ENCODE measurements at regions of chr2 and their contacts with region 1.

Region 1: DNA sequence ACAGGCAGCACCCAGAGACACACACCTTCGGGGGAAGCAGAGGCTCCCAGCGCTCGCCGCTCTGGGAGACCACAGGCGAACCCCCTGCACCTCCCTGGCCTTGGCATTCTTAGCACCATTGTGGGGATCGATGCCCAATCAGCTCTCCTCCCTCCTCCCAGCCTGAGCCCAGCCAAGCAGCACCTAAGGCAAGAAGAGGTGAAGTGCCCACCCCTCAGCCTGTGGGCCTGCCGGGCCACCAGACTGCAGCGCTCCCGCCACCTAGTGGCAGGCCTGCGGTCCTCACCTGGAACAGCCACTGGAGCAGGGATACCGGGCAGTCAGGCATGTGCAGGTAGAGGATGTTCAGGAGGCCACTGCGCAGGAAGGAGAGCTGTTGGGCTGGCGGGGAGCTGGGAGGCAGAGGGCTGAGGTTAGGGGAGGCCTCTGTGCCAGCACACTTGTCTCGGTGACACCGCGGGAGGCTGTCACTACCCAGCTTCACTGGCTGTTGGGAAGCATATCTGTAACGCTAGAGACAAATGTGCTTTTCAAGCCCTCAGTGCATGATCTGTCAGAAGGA is 35.2 kb downstream of the FAM178B start:
- DNase-seq: peak; percentile 63 to 76
- ATAC-seq: peak; percentile 91 to 96
- H3K4me3 ChIP-seq: no peak overlapping the region
- H3K27ac ChIP-seq: no peak overlapping the region
- H3K4me1 ChIP-seq: no peaks in the 10 kb centered on the region
- CTCF ChIP-seq: peak; percentile 81
- EP300 ChIP-seq: no peak
- POLR2A ChIP-seq: no peak
- RAD21 ChIP-seq: peak; percentile 84 to 85

Region 2: GRCh38 chr2:96413323-96413722 is 537.9 kb before region 1 on chr2:
- CTCF ChIA-PET with region 1: no interaction called
- POLR2A ChIA-PET with region 1: no interaction called
- DNase-seq: peak in 1 of 2 experiments; percentile 61
- ATAC-seq: peak; percentile 84 to 87
- H3K4me3 ChIP-seq: peak overlapping the region; percentile 47
- H3K27ac ChIP-seq: peak overlapping the region; percentile 72 to 79
- H3K4me1 ChIP-seq: peaks cover 34% of the 10 kb centered on the region
- CTCF ChIP-seq: peak; percentile 21; the same call in 2 of the 3 replicates
- EP300 ChIP-seq: no peak
- POLR2A ChIP-seq: no peak
- RAD21 ChIP-seq: no peak

Region 3: GRCh38 chr2:96816128-96816835 is 134.9 kb before region 1 on chr2 and contains the start of gene CNNM3:
- CTCF ChIA-PET with region 1: interaction called, 18 read pairs
- POLR2A ChIA-PET with region 1: no interaction called
- DNase-seq: peak; percentile 93 to 96
- ATAC-seq: peak; percentile 88 to 97
- H3K4me3 ChIP-seq: peak within 1 kb of the TSS; percentile 92
- H3K27ac ChIP-seq: peak within 1 kb of the TSS; percentile 91 to 94
- H3K4me1 ChIP-seq: peaks cover 30% of the 10 kb centered on the region
- CTCF ChIP-seq: peak; percentile 27
- EP300 ChIP-seq: no peak
- POLR2A ChIP-seq: peak; percentile 68
- RAD21 ChIP-seq: no peak; a peak in 2 of 5 replicates
- polyA plus RNA-seq, gene CNNM3: 11.8 and 13.6 TPM in 2 replicates

Region 4: GRCh38 chr2:96856776-96857673 is 94.1 kb before region 1 on chr2:
- CTCF ChIA-PET with region 1: interaction called, 123 read pairs
- POLR2A ChIA-PET with region 1: interaction called, 4 read pairs
- DNase-seq: peak in 1 of 2 experiments; percentile 43
- ATAC-seq: peak; percentile 16 to 27
- H3K4me3 ChIP-seq: peak overlapping the region; percentile 63
- H3K27ac ChIP-seq: peak overlapping the region; percentile 82 to 97
- H3K4me1 ChIP-seq: peaks cover 27% of the 10 kb centered on the region; the same call in 2 of the 3 replicates
- CTCF ChIP-seq: no peak
- EP300 ChIP-seq: no peak
- POLR2A ChIP-seq: no peak
- RAD21 ChIP-seq: no peak

Region 5: DNA sequence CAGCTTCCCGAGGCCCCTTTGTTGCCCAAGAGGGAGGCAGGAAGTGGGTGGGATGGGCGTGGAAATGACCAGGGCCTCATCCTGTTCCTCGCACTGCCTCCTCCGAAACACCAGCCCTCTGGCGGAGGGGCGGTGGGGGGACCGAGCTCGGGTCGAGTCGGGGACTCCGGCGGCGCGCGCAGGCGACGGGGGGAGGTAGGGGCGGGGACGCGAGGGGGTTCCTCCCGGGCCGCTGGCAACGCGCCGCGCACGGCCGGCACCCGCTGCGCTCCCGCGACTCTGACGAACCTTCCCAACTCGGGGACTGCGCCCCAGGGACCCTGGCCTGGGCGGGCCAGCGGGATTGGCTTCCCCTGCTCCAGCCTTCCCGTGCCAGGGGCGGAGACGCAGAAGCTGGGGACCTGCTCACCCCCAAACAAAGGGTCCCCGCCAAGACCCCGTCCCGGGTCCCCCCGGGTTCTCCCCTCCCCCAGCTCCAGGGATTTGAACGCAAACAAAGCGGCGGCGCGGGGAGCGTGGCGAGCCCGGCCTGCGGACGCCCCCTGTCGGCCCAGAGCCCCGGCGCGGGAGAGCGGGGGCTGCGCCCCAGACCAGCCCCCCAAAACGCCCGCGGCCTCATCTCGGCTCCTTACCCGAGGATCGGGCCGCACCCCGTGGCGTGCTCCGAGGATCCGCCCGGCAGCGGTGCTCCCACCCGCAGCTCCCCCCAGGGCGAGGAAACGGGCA is 82.5 kb before region 1 on chr2:
- CTCF ChIA-PET with region 1: interaction called, 44 read pairs
- POLR2A ChIA-PET with region 1: no interaction called
- DNase-seq: peak; percentile 87 to 89
- ATAC-seq: peak; percentile 81 to 90
- H3K4me3 ChIP-seq: peak overlapping the region; percentile 100
- H3K27ac ChIP-seq: peak overlapping the region; percentile 99 to 100
- H3K4me1 ChIP-seq: peaks cover 13% of the 10 kb centered on the region
- CTCF ChIP-seq: peak; percentile 77
- EP300 ChIP-seq: no peak
- POLR2A ChIP-seq: peak; percentile 77
- RAD21 ChIP-seq: peak in 1 of 2 experiments; percentile 51; a peak in 4 of 5 replicates

Region 6: DNA sequence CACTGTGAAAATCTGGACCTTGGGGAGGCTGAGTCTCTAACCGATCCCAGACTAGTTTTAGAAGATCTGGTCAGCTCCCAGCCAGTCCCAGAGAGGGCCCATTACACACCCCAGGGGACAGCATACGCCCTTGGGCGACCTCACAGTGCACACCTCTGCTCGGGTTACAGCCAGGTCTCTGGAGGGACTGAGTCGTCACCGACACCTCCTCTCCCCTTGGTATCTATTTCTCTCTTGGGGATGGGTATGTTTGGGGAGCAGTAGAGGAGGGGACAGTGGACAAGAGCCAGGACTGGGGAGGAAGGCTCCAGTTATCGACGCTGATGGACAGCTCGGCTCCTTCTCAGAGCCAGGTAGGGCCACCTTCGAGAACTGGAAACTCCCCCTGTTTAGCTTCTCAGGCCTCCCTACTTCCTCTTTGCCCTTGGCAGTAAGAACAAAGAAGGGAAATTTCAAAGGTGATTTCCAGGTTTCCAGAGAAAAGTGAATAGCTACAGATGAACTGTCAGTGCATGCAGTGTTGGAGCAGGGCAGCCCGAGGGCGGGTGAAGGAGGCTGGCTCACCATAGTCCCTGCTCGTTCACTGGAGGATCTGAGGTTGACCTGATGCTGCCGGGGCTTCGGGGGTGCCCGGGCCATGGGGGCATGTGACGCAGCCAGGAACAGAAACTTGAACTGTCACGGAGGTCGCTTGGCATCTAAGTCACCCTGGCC is 76.9 kb before region 1 on chr2:
- CTCF ChIA-PET with region 1: interaction called, 16 read pairs
- POLR2A ChIA-PET with region 1: no interaction called
- DNase-seq: no peak
- ATAC-seq: no peak
- H3K4me3 ChIP-seq: no peak overlapping the region
- H3K27ac ChIP-seq: no peak overlapping the region
- H3K4me1 ChIP-seq: peaks cover 7% of the 10 kb centered on the region
- CTCF ChIP-seq: no peak
- EP300 ChIP-seq: no peak
- POLR2A ChIP-seq: no peak
- RAD21 ChIP-seq: no peak

Region 7: GRCh38 chr2:96923810-96924774 is 27.1 kb before region 1 on chr2:
- CTCF ChIA-PET with region 1: interaction called, 15 read pairs
- POLR2A ChIA-PET with region 1: no interaction called
- DNase-seq: no peak
- ATAC-seq: no peak
- H3K4me3 ChIP-seq: no peak overlapping the region
- H3K27ac ChIP-seq: no peak overlapping the region
- H3K4me1 ChIP-seq: no peaks in the 10 kb centered on the region
- CTCF ChIP-seq: no peak
- EP300 ChIP-seq: no peak
- POLR2A ChIP-seq: no peak
- RAD21 ChIP-seq: no peak

Region 8: DNA sequence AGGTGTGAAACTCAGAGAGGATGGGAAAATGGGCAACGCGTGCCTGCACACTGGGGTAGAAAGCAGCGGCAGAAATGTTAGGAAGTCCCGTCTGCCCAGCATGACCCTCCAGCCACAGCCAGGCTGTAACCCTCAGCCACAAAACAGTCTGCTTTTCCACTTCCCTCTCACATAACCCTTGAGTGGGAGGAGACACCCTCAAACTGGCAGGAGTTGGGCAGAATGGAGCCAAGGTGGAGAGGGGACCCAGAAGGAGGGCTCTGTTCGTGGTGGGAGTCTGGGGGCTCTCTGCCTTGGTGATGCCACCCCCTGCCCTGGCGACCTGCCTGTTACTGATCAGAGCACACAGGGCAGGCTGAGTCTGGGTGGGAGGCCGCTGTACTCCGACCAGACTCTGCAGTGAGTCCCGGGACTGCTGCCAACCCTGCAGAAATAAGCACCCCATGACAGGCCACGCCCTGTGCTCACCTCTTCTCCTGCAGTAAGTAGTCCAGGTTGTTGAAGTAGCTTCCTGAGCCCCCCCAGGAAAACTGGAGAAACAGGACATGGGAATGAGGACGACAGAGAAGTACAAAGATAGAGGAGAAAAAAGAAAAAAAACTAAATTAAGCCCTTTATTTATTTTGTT is 19.2 kb after region 1 on chr2:
- CTCF ChIA-PET with region 1: interaction called, 15 read pairs
- POLR2A ChIA-PET with region 1: no interaction called
- DNase-seq: no peak
- ATAC-seq: peak in 1 of 2 experiments; percentile 38; a peak in 2 of 6 replicates
- H3K4me3 ChIP-seq: no peak overlapping the region
- H3K27ac ChIP-seq: peak overlapping the region in 1 of 2 experiments; percentile 56; a peak in 2 of 6 replicates
- H3K4me1 ChIP-seq: peaks cover 7% of the 10 kb centered on the region; the same call in 2 of the 3 replicates
- CTCF ChIP-seq: no peak
- EP300 ChIP-seq: no peak
- POLR2A ChIP-seq: no peak
- RAD21 ChIP-seq: no peak